CD4-positive, alpha-beta T cell (primary cell): ENCODE measurements at regions of chr12 and their contacts with region 1.

Region 1: GRCh38 chr12:3587402-3588013 is 96.5 kb downstream of the PRMT8 start:
- DNase-seq: no peak
- ATAC-seq: no peak
- H3K4me3 ChIP-seq: no peak overlapping the region
- H3K4me3 Mint-ChIP-seq: no peak overlapping the region
- H3K27ac ChIP-seq: no peak overlapping the region
- H3K27ac Mint-ChIP-seq: no peak overlapping the region
- H3K4me1 ChIP-seq: no peaks in the 10 kb centered on the region
- H3K4me1 Mint-ChIP-seq: no peaks in the 10 kb centered on the region
- H3K27me3 ChIP-seq: peaks cover 7 to 8% of the 10 kb centered on the region in 2 experiments
- H3K27me3 Mint-ChIP-seq: peaks cover 4% of the 10 kb centered on the region
- CTCF ChIP-seq: no peak

Region 2: GRCh38 chr12:3371018-3371417 is 216.5 kb before region 1 on chr12:
- CTCF ChIA-PET with region 1: no interaction called
- POLR2A ChIA-PET with region 1: no interaction called
- intact Hi-C with region 1: loop called in 1 of 2 experiments (anchors 10 kb)
- DNase-seq: no peak
- ATAC-seq: no peak
- H3K4me3 ChIP-seq: no peak overlapping the region
- H3K4me3 Mint-ChIP-seq: no peak overlapping the region
- H3K27ac ChIP-seq: no peak overlapping the region
- H3K27ac Mint-ChIP-seq: no peak overlapping the region
- H3K4me1 ChIP-seq: no peaks in the 10 kb centered on the region
- H3K4me1 Mint-ChIP-seq: no peaks in the 10 kb centered on the region
- H3K27me3 ChIP-seq: peaks cover 9 to 25% of the 10 kb centered on the region in 2 experiments
- H3K27me3 Mint-ChIP-seq: peaks cover 11% of the 10 kb centered on the region
- CTCF ChIP-seq: no peak